ENCODE measurements at regions of chr1 and their contacts with region 1.

Region 1: GRCh38 chr1:41540886-41541591 is 56.6 kb upstream of the EDN2 start:
- DNase-seq: no peak
- ATAC-seq: peak; percentile 37
- H3K4me3 ChIP-seq: no peak overlapping the region
- H3K4me3 Mint-ChIP-seq: peak overlapping the region; percentile 49
- H3K27ac ChIP-seq: no peak overlapping the region
- H3K27ac Mint-ChIP-seq: peak overlapping the region; percentile 66
- H3K4me1 ChIP-seq: peaks cover 36 to 48% of the 10 kb centered on the region in 2 donors
- H3K4me1 Mint-ChIP-seq: peaks cover 56% of the 10 kb centered on the region
- H3K27me3 ChIP-seq: no peaks in the 10 kb centered on the region
- H3K27me3 Mint-ChIP-seq: no peaks in the 10 kb centered on the region
- CTCF ChIP-seq: no peak

Region 2: DNA sequence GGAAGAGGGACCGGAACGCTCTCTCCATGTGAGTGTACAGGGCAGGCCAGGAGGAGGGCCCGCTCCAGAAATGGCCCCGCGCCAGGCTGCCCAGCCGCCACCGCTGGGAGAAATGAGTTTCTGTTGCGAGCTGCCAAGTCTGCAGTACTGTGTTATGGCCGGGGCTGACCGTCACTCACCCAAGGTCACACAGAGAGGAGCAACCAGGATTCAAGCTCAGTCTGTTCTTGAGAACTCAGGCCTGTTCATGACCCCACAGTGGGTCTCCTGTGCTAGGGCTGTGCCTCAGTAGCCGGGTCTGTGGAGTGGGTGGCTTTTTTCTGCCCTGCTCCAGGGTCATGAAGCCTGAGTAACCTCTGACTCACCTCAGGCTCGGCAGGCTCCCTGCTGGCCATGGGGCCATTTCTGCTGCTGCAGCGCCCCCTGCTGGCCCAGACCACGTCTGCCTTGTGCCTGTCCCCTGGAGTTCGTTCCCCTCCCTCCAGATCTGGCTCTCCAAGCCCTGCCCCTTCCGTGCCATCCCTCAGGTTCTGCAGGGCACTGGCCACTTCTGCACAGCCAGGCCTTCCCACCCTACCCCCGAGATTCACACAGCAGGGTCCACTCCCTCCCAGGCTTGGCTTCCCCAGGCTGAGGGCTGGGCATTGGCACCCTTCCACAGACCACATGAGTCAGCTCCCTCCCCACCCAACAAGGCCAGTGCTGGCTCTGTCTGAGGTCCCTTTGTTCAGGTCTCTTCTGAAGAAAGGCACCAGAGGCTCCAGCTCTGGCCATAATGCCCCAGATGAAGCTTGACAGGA is 108.4 kb before region 1 on chr1:
- CTCF ChIA-PET with region 1: no interaction called
- POLR2A ChIA-PET with region 1: no interaction called
- intact Hi-C with region 1: no loop called
- DNase-seq: peak; percentile 58
- ATAC-seq: peak; percentile 33
- H3K4me3 ChIP-seq: no peak overlapping the region
- H3K4me3 Mint-ChIP-seq: no peak overlapping the region
- H3K27ac ChIP-seq: no peak overlapping the region
- H3K27ac Mint-ChIP-seq: no peak overlapping the region
- H3K4me1 ChIP-seq: no peaks in the 10 kb centered on the region
- H3K4me1 Mint-ChIP-seq: no peaks in the 10 kb centered on the region
- H3K27me3 ChIP-seq: peaks cover 0 to 3% (median 1%) of the 10 kb centered on the region in 4 experiments
- H3K27me3 Mint-ChIP-seq: peaks cover 32% of the 10 kb centered on the region
- CTCF ChIP-seq: peak; percentile 70

Region 3: DNA sequence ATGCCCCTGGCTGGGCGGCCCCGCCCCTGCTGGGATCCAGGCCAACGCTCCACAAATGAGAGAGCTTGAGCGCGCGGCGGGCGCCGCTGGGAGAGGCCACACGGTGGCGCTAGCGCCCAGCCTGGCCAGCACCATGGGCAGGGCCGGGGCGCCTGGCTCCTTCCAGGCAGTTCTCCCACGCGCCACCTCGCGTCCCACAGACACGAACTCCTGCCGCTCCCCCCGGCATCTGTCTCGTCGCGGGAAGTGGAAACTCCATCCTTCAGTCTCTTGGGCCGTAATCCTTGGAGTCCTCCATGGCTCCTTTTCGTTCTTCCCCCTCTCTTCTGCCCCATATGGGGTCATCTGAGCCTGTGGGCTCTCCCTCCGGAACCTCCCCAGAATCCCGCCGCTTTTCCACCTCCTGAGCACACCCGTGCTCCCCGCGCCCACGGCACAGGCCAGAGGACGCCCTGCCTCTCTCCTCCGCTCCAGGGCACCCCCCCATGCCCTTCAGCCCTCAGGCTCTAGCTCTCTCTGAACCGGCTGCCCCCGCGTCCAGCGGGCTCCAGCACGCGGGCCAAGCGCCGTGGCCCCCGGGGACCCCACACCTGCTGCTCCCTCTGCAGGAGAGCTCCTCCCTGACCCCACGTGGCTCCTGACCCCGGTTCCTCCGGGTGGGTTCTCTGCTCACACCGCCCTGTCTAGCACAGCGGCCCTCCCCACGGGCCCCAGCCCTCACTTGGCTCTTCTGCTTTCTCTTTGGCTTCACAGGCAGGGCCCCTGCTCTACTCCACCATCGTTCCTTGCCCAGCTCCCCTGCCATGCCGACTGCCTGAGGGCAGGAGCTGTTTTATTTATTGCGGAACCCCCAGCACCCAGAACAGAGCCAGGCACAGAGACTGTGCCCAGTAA is 24.6 kb before region 1 on chr1:
- CTCF ChIA-PET with region 1: interaction called, 10 read pairs
- POLR2A ChIA-PET with region 1: no interaction called
- intact Hi-C with region 1: no loop called
- DNase-seq: peak; percentile 77
- ATAC-seq: peak; percentile 87
- H3K4me3 ChIP-seq: peak overlapping the region in 4 of 5 experiments; percentile 48 to 59 (median 53)
- H3K4me3 Mint-ChIP-seq: peak overlapping the region; percentile 87
- H3K27ac ChIP-seq: no peak overlapping the region
- H3K27ac Mint-ChIP-seq: peak overlapping the region; percentile 37
- H3K4me1 ChIP-seq: peaks cover 25 to 39% of the 10 kb centered on the region in 2 donors
- H3K4me1 Mint-ChIP-seq: peaks cover 35% of the 10 kb centered on the region
- H3K27me3 ChIP-seq: no peaks in the 10 kb centered on the region
- H3K27me3 Mint-ChIP-seq: no peaks in the 10 kb centered on the region
- CTCF ChIP-seq: peak; percentile 95